ENCODE measurements at regions of chr16 and their contacts with region 1.

Region 1: DNA sequence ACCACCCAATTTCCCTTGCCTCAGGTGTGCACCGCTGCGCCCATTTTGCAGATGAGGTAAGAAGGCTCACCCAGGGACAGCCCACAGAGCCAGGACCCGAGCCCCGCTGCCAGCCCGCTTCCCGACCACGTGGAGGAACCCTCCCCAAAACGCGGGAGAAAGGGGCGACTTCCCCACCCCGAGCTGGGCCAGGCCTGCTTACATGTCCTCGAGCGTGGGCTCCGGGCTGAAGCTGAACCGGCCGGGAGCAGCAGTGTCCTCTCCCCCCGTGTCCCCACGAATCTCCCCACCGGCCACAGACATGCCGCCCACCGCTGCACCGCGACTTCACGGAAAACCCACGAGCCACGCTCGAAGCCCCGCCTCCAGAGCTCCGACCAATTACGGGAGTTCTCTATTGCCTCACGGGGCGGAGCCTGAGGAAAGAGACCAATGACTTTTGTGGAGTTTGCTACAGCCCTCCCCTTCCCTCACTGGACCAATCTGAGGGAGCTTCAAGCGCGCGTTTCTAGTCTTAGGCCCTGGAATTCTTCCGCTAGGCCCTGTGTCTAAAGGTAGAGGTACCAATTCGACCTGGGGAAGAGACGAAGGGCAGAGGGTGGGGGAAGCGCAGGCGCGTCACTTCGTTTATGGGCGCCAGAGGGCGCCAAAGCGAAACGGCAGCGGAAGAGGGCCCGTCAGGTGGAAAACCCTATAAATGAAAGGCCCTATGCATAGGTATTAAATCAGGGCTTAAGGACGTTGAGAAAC is at the start of gene DCTPP1:
- H3K4me3 ChIP-seq: peak within 1 kb of the TSS; percentile 76
- H3K27ac ChIP-seq: peak within 1 kb of the TSS; percentile 12; the same call in 1 of the 2 replicates
- H3K4me1 ChIP-seq: no peaks in the 10 kb centered on the region
- CTCF ChIP-seq: peak; percentile 99

Region 2: GRCh38 chr16:30417529-30418349 is 12.1 kb before region 1 on chr16:
- CTCF ChIA-PET with region 1: interaction called, 13 read pairs
- POLR2A ChIA-PET with region 1: interaction called, 41 read pairs
- H3K4me3 ChIP-seq: peak overlapping the region; percentile 37
- H3K27ac ChIP-seq: peak overlapping the region; percentile 85
- H3K4me1 ChIP-seq: peaks cover 12% of the 10 kb centered on the region
- CTCF ChIP-seq: peak; percentile 89

Region 3: GRCh38 chr16:30557957-30558788 is 128.3 kb after region 1 on chr16 and contains the start of gene ZNF764:
- CTCF ChIA-PET with region 1: no interaction called
- POLR2A ChIA-PET with region 1: interaction called, 10 read pairs
- H3K4me3 ChIP-seq: peak within 1 kb of the TSS; percentile 88
- H3K27ac ChIP-seq: peak within 1 kb of the TSS; percentile 98
- H3K4me1 ChIP-seq: peaks cover 2% of the 10 kb centered on the region; the same call in 1 of the 2 replicates
- CTCF ChIP-seq: peak; percentile 84

Region 4: DNA sequence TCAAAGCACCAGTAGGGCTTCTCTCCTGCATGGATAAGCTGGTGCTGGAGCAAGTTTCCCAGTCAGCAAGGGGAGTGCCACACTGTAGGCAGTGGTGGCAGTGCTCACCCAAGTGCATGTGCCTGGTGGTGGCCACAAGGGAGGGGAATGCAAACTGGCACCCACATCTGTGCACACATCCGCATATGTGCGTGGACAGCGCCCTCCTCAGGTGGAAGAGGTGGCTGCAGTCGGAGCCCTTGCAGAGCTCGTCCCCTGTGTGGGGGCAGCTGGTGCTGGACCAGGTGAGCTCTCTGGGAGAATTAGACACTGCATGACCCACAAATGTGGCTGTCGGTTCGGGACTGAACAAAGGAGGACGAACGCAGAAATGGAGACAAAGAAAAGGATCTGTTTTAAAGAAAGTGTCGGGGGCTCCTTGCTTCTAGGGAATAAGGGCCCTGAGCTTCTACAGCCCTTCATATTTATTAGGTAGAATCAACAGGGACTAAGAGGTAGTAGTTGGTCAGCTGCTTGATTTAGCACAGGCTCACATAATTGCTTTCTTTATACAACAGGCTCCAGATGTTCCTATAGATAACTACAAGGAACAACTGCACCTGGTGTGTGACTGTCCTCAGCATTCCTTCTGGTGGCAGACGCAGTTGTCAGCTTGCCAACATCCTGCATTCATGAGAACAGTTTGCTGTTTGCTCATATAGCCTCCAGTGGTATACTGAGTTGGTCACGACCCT is 185.7 kb after region 1 on chr16:
- CTCF ChIA-PET with region 1: interaction called, 43 read pairs
- POLR2A ChIA-PET with region 1: interaction called, 8 read pairs
- H3K4me3 ChIP-seq: no peak overlapping the region
- H3K27ac ChIP-seq: no peak overlapping the region
- H3K4me1 ChIP-seq: no peaks in the 10 kb centered on the region
- CTCF ChIP-seq: peak; percentile 95

Region 5: GRCh38 chr16:30628627-30629540 is 199.0 kb after region 1 on chr16:
- CTCF ChIA-PET with region 1: interaction called, 10 read pairs
- POLR2A ChIA-PET with region 1: interaction called, 11 read pairs
- H3K4me3 ChIP-seq: no peak overlapping the region
- H3K27ac ChIP-seq: no peak overlapping the region
- H3K4me1 ChIP-seq: no peaks in the 10 kb centered on the region
- CTCF ChIP-seq: peak; percentile 83